ENCODE measurements at regions of chr1 and their contacts with region 1.

Region 1: GRCh38 chr1:10867138-10867721 is 70.8 kb upstream of the CASZ1 start:
- DNase-seq: no peak
- H3K4me3 ChIP-seq: peak overlapping the region; percentile 32 to 49 (median 47)
- H3K27ac ChIP-seq: no peak overlapping the region
- H3K4me1 ChIP-seq: peaks cover 10% of the 10 kb centered on the region
- H3K27me3 ChIP-seq: no peaks in the 10 kb centered on the region
- CTCF ChIP-seq: peak in 1 of 2 donors; percentile 28

Region 2: DNA sequence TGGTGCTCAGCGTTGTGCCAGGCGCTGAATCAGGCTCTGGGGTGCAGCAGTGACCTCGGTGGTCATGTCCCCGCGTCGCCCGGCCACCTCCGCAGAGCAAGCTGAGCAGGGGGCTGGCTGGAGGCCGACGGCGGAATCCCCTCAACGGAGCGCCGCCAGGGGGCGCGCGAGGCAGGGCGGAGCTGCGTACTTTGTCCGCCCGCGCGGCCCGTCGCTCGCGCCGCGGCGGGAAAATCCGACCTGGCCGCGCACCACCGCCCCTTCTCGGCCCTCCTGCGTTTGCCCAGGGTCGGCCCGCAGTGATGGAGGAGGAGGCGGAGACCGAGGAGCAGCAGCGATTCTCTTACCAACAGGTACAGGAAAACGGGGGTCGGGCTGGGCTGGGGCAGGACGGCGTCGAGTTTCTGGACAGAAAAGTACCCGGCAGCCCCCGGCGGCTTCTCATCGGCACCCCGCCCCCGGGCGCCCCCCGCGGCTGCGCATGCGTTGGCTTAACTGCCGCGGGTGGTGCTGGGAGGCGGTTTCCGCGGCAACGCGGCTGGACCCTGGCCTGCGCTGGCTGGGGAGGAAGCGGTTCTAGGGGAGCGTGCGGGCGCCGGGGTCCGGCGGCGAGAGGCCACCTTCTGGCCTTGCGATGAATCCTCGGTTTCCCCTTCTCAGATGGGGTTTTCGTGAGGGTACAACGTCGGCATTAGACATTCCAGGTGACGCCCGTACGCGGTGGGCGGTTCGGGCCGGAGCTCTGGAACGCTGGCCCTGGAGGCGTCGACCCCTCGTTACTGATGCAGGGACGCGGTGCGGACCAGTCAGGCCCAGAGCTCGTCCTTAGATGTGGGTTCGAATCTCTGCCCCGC is 436.8 kb before region 1 on chr1 and contains the start of gene CENPS:
- CTCF ChIA-PET with region 1: no interaction called
- dilution Hi-C with region 1: no loop called
- in situ Hi-C with region 1: no loop called
- intact Hi-C with region 1: loop called (anchors 2 kb)
- DNase-seq: peak; percentile 87
- H3K4me3 ChIP-seq: peak within 1 kb of the TSS; percentile 71 to 96 (median 87)
- H3K27ac ChIP-seq: peak within 1 kb of the TSS; percentile 91
- H3K4me1 ChIP-seq: peaks cover 9% of the 10 kb centered on the region
- H3K27me3 ChIP-seq: no peaks in the 10 kb centered on the region
- CTCF ChIP-seq: peak; percentile 65 to 89
- total RNA-seq, gene CENPS: 9.7 to 24.1 TPM

Region 3: DNA sequence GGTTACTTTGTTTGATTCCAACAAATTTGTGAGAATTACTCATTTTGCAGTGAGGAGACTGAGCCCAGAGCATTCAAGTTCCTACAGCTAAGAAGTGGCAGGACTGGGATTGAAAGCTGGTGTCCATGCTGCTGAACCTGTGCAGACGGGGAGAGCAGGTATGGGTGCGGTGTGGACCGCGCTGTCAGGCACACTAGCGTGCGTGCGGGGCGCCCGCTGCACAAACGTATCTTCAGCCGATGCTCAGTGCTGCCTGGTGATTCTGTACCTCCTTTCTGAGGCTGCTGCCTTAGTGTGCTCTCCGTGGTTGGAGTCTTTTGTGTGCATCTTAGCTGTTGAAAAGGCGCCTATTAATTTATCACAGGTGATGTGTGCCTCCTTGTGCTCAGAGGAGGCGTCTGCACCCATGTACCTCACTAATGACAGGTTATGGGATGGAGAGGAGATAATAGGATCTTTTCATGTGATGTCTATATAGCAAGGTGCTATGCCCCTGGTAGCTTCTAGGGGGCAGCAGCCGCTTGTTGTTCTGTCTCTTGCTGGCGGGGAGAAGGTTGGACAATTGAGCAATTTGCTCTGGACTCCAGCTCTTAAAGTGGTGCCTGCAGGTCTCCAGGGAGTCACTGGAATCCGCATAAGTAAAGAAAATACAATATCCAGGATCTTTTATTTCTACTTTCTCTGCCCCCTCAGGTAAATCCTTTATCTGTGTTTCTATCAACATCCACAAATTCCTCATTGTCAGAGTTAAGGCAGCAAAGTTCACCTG is 359.9 kb before region 1 on chr1:
- CTCF ChIA-PET with region 1: interaction called, 4 read pairs
- dilution Hi-C with region 1: no loop called
- in situ Hi-C with region 1: loop called (anchors 10 to 25 kb)
- intact Hi-C with region 1: loop called (anchors 1 kb)
- DNase-seq: peak; percentile 72
- H3K4me3 ChIP-seq: no peak overlapping the region
- H3K27ac ChIP-seq: no peak overlapping the region
- H3K4me1 ChIP-seq: peaks cover 25% of the 10 kb centered on the region
- H3K27me3 ChIP-seq: no peaks in the 10 kb centered on the region
- CTCF ChIP-seq: peak; percentile 92 to 97

Region 4: DNA sequence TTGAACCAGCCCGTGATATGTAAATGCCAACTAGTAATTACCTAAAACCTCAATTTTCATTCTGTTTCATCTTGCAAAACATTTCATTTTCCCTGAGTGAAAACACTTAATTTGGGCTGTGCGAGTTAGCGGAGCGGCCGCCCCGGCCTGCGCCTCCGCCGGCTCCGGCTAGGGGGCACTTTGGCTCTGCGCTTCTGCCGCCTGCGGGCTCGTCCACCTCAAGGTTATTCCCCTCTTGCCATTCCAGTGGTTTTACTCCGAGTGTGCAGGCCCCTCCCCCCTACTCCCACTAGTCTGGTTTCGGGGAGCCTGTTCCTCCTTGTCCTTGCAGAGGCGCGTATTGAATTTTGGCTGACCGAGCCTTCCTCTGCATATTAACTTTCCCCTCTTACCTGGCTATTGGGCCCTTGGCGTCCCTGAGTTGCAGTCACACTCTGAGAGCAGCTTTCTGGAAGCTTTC is 336.9 kb before region 1 on chr1:
- CTCF ChIA-PET with region 1: no interaction called
- dilution Hi-C with region 1: no loop called
- in situ Hi-C with region 1: no loop called
- intact Hi-C with region 1: loop called (anchors 1 kb)
- DNase-seq: peak; percentile 73
- H3K4me3 ChIP-seq: peak overlapping the region; percentile 3 to 20 (median 6)
- H3K27ac ChIP-seq: peak overlapping the region; percentile 80
- H3K4me1 ChIP-seq: peaks cover 46% of the 10 kb centered on the region
- H3K27me3 ChIP-seq: no peaks in the 10 kb centered on the region
- CTCF ChIP-seq: peak; percentile 80 to 95

Region 5: DNA sequence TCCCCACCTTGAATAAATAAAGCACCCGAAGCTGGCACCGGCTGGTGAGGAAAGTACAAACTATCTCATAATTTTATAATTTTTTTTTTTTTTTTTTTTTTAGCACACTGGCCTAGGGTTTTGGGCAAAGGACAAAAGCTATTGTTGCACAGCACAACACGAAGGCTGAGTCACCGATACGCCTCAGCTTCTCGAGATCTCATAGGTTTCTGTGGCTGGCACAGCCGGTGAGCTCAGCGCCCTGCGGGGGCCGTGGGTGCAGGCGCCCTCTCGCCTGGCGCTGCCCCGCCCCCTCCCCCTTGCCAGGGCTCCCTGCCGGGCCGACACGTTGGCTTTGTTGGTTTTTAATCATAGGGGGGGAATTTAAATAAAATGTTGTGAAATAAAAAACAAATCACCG is 88.0 kb before region 1 on chr1:
- CTCF ChIA-PET with region 1: no interaction called
- dilution Hi-C with region 1: no loop called
- in situ Hi-C with region 1: no loop called
- intact Hi-C with region 1: no loop called
- DNase-seq: peak; percentile 98
- H3K4me3 ChIP-seq: no peak overlapping the region
- H3K27ac ChIP-seq: peak overlapping the region; percentile 85
- H3K4me1 ChIP-seq: peaks cover 23% of the 10 kb centered on the region
- H3K27me3 ChIP-seq: no peaks in the 10 kb centered on the region
- CTCF ChIP-seq: no peak

Region 6: DNA sequence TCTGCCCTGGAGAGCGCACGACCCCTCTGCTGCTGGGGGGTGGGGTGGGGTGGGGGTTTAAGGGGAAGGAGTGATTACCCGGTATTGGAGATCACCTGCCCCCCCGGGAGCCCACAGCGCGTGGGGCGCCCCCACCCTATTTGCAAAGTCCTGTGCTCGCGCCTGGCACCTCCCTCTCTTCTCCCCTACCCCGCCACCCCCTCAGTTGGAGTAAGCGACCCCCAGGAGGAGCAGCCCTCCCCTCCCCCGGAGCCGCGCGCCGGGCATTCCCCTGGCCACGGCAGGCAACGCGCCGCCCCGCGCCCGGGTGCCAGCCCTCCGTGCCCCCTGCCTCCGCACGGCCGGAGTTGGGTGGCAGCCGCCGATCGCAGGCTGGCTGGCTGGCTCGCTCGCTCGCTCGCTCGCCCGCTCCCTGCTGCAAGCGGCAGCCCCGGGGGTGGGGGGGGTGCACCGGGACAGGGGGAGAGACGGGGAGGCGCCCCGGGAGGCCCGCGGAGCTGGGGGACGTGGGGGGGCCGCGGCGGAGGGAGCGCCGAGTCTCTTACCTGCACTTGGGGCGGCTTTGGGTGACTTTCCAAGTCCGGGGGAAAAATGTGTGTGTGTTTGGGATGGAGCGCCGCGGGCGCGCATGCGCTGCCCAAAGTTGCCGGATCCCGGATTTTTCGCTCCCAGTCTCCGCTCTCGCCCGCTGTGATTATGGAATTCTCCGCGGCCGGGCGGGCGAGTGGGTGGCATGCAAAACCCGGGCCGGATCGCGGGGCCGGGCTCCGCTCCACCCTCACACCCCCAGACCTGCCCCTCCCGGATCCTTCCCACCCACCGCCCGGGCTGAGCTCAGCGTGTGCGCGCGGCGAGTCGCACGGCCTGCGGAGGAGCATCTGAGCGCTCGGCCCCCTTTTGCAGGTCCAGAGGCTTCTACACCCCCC is 70.9 kb before region 1 on chr1 and contains the start of gene CASZ1:
- CTCF ChIA-PET with region 1: no interaction called
- dilution Hi-C with region 1: no loop called
- in situ Hi-C with region 1: no loop called
- intact Hi-C with region 1: loop called (anchors 5 kb)
- DNase-seq: peak; percentile 92
- H3K4me3 ChIP-seq: peak within 1 kb of the TSS; percentile 64 to 87 (median 80)
- H3K27ac ChIP-seq: no peak within 1 kb of the TSS
- H3K4me1 ChIP-seq: peaks cover 10% of the 10 kb centered on the region
- H3K27me3 ChIP-seq: no peaks in the 10 kb centered on the region
- CTCF ChIP-seq: no peak
- total RNA-seq, gene CASZ1: 13.0 to 14.1 TPM

Region 7: GRCh38 chr1:10901086-10901890 is 34.1 kb after region 1 on chr1:
- CTCF ChIA-PET with region 1: no interaction called
- dilution Hi-C with region 1: no loop called
- in situ Hi-C with region 1: no loop called
- intact Hi-C with region 1: loop called (anchors 2 kb)
- DNase-seq: peak; percentile 64
- H3K4me3 ChIP-seq: peak overlapping the region in 2 of 3 experiments; percentile 30 to 35
- H3K27ac ChIP-seq: peak overlapping the region; percentile 82
- H3K4me1 ChIP-seq: peaks cover 46% of the 10 kb centered on the region
- H3K27me3 ChIP-seq: no peaks in the 10 kb centered on the region
- CTCF ChIP-seq: no peak

Region 8: GRCh38 chr1:10941891-10942541 is 74.8 kb after region 1 on chr1:
- CTCF ChIA-PET with region 1: no interaction called
- dilution Hi-C with region 1: no loop called
- in situ Hi-C with region 1: no loop called
- intact Hi-C with region 1: loop called (anchors 2 kb)
- DNase-seq: no peak
- H3K4me3 ChIP-seq: no peak overlapping the region
- H3K27ac ChIP-seq: no peak overlapping the region
- H3K4me1 ChIP-seq: peaks cover 4% of the 10 kb centered on the region
- H3K27me3 ChIP-seq: no peaks in the 10 kb centered on the region
- CTCF ChIP-seq: peak; percentile 84 to 96

Measured in mammary epithelial cell (primary cell).